ENCODE measurements at regions of chr3 and their contacts with region 1.

Region 1: DNA sequence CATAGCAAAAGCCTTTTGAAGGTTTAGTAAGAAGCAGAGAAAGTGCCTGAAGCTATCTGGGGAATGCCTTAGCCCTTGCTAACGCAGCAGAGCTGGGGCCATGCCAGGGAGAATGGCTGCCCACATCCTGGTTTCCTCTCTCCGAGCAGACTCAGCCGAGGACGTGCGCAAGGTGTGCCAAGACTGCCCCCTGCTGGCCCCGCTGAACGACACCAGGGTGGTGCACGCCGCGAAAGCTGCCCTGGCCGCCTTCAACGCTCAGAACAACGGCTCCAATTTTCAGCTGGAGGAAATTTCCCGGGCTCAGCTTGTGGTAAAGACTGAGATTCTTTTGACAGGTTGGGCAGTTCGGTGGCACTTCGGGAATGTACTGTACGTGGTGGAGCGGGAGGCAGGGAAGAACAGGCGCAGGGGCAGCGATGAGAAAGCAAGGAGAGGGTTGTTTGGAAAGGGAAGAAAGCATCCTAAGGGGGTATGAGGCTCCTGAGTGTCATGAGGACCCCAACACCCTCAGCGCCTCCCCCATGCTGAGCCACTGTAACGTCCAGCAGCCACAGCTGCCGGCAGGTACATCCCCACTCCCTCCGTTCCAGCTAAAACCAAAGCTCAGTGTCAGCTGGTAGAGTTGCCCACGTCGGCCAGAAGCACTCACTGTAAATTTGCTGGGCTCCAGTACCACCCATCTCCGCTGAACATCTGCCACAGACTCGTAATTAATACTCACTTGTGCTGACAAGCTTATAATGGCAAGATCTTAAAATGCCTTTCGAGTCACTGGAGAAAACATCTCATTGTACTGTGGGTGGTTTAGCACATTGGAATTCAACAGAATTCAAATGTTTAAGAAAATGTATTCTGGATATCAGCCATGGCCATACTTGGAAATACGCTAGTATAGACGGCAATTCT is 4.4 kb downstream of the AHSG start:
- DNase-seq: peak; percentile 89
- H3K4me3 ChIP-seq: peak overlapping the region in 1 of 2 donors; percentile 20
- H3K27ac ChIP-seq: no peak overlapping the region
- H3K4me1 ChIP-seq: no peaks in the 10 kb centered on the region
- H3K27me3 ChIP-seq: no peaks in the 10 kb centered on the region
- CTCF ChIP-seq: peak; percentile 69 to 79 (median 75)
- POLR2A ChIP-seq: no peak

Region 2: GRCh38 chr3:186679151-186679550 is 61.9 kb after region 1 on chr3:
- intact Hi-C with region 1: no loop called
- DNase-seq: no peak
- H3K4me3 ChIP-seq: no peak overlapping the region
- H3K27ac ChIP-seq: no peak overlapping the region
- H3K4me1 ChIP-seq: no peaks in the 10 kb centered on the region
- H3K27me3 ChIP-seq: no peaks in the 10 kb centered on the region
- CTCF ChIP-seq: no peak
- POLR2A ChIP-seq: no peak

Region 3: DNA sequence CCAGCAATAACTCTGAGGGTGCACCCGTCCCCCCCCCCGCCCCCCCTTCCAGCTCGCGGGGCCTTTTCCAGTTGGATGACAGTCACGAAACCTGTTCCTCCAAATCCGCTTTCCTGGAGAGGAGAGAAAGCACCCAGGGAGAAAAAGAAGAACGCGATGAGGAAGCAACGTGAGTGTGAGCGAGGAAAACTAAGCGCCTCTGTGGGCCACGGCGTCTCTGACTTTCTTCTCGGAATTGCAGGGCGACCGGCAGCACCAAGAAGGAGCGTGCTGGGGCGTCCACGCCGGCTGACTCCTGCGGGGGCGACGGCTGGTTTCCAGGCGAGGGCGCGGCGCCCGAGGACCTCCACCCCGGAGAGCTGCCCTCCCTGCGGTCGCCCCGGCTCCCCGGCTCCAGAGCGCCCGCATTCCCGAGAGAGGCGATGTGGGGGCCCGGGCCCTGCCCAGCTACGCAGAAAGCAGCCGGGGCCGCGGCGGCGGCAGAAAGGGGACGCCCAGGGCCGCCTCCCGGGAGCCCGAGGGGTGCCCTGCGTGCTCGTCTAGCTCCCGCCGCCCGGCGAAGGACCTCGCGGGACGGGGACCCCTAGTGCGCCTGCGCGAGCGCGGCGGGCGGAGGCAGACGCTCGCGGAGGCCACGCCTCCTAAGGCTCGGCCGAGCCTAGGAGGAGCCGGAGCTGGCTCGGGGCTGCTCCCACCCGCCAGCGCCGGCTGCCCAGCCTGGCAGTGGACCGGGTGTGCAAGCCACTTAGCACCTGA is 209.9 kb after region 1 on chr3:
- intact Hi-C with region 1: loop called (anchors 10 kb)
- DNase-seq: peak; percentile 83
- H3K4me3 ChIP-seq: peak overlapping the region; percentile 55 to 67
- H3K27ac ChIP-seq: no peak overlapping the region
- H3K4me1 ChIP-seq: peaks cover 10% of the 10 kb centered on the region
- H3K27me3 ChIP-seq: no peaks in the 10 kb centered on the region
- CTCF ChIP-seq: no peak
- POLR2A ChIP-seq: no peak

Measured in testis (tissue), 5 donors.